ENCODE measurements at regions of chr15 and their contacts with region 1.

Region 1: DNA sequence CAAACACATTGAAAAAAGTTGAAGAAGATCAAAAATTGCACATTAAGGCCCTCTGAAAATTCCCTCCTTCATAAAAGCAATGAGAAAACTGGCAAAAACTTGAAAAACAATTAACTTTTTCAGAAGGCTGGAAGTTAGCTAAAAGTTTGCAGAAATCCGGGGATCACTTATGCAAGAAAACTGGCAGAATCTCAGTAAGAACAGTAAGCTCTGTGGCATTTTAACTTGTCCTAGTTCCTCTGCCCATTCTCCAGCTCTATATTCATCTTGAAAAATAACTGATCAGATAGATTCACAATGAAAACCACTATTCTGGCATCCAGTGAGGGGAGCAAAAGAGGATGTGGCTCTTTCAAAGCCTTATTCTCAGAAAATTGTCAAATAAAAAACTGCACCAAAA is 566.8 kb downstream of the NTRK3 start:
- DNase-seq: no peak
- ATAC-seq: no peak
- H3K4me3 ChIP-seq: no peak overlapping the region
- H3K27ac ChIP-seq: no peak overlapping the region
- H3K4me1 ChIP-seq: no peaks in the 10 kb centered on the region
- H3K27me3 ChIP-seq: no peaks in the 10 kb centered on the region
- CTCF ChIP-seq: no peak
- POLR2A ChIP-seq: no peak

Region 2: DNA sequence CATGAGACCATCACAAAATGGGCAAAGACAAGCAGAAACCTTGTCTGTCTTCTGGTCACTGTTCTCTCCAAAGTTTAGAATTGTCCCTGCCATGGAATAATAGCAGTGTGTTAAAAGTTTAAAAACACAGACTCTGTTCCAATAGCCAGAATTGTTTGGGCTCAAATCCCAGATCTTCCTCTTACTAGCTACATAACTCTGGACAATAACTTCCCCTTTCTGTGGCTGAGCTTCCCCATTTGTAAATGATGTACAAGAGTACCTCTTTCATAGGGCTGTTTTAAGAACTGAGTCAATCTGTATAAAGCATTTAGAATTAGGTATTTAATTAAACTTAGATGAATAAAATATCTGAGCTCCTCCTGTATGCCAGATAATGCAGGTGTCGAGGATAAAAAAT is 56.2 kb before region 1 on chr15:
- intact Hi-C with region 1: loop called in 1 of 10 experiments (anchors 10 kb)
- DNase-seq: no peak
- ATAC-seq: no peak
- H3K4me3 ChIP-seq: no peak overlapping the region
- H3K27ac ChIP-seq: no peak overlapping the region
- H3K4me1 ChIP-seq: peaks cover 0 to 6% (median 0%) of the 10 kb centered on the region in 12 donors
- H3K27me3 ChIP-seq: no peaks in the 10 kb centered on the region
- CTCF ChIP-seq: no peak
- POLR2A ChIP-seq: no peak

Region 3: GRCh38 chr15:87973501-87974215 is 283.9 kb after region 1 on chr15:
- intact Hi-C with region 1: no loop called
- DNase-seq: no peak
- ATAC-seq: peak in 1 of 4 donors; percentile 21
- H3K4me3 ChIP-seq: no peak overlapping the region
- H3K27ac ChIP-seq: no peak overlapping the region
- H3K4me1 ChIP-seq: no peaks in the 10 kb centered on the region
- H3K27me3 ChIP-seq: no peaks in the 10 kb centered on the region
- CTCF ChIP-seq: no peak
- POLR2A ChIP-seq: no peak